ENCODE measurements at regions of chr17 and their contacts with region 1.

Region 1: DNA sequence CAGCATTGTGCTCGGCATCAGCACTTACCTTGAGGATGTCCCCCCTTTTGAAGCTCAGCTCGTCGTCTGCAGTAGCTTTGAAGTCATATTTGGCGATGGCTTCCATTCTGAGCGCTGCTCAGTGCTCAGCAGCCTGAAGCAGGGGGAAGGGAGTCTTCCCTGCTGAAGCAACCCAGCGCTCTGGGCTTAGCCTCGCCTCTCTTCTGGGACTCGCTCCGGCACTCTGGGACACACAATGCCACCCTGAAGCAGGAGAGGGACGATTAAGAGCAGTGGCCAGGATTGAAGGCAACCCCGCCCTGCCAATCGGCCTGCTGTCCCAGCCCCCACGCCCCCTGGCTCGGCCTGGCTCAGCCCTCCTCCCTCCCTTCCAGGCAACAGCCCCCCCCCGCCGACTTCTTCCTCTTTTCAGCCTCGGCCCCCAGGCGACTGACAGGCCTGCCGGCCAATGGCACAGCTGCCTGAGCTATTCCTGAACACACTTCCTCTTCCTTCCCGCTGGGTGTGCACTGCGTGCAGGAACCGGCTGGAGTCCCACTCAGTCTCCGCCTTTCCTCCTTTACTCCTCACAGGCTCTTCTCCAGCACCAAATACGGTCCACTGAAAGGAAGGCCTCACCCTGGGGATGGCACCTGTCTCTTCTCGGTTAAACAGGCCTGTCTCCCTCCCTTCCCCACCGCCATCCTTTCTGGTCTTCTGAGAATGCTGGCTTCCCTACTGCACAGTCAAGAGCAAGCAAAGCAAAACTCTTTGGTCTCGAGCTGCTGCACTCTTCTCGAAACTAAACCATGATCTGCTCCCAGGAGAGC is 11.8 kb downstream of the GRB2 start:
- DNase-seq: peak; percentile 97
- ATAC-seq: peak; percentile 99
- H3K4me3 ChIP-seq: peak overlapping the region; percentile 69 to 94 (median 91)
- H3K27ac ChIP-seq: peak overlapping the region; percentile 72
- H3K4me1 ChIP-seq: peaks cover 69% of the 10 kb centered on the region
- H3K27me3 ChIP-seq: peaks cover 0 to 3% of the 10 kb centered on the region in 2 experiments; a peak in 1 of 5 replicates
- CTCF ChIP-seq: peak; percentile 44
- EP300 ChIP-seq: peak in 1 of 2 experiments; percentile 62; a peak in 3 of 4 replicates
- POLR2A ChIP-seq: peak; percentile 84 to 90
- RAD21 ChIP-seq: 0 out of 2 replicates have a peak, but pooled peaks have one; percentile 28

Region 2: DNA sequence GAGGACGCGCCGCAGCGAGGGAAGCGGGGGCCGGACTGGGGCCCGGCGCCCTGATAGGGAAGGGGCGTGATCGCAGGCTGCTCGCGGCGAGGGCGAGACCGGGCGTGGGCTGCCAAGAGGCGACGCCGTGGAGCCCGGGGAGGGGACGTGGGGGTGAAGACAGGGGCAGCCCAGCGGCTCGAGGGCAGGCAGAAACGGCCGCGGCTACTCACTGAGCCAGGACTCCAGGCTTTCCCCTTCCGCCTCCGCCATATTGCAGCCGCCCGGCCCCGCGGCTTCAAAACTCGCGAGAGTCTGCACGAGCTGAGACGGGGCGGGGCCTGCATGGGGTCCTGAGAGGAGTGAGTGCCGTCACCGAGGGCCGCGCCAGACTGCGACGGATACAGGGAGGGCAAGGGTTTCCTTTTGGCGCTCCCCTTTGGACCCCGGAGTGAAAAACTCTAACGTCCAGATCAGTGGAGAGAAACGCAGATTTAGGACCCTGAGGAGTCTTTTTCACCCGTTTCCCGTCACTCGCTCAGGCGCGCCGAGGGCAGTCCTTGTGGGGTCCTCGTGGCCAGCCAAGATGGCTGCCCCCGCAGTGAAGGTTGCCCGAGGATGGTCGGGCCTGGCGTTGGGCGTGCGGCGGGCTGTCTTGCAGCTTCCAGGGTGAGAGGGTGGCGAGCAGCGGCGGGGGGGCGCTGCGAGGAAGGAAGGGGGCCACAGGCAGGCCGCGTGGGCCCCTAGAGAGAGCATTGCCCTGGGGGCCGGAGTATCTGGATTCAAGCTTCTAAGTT is 132.2 kb before region 1 on chr17 and contains the starts of genes GGA3 and MRPS7:
- CTCF ChIA-PET with region 1: no interaction called
- POLR2A ChIA-PET with region 1: interaction called, 43 read pairs
- in situ Hi-C with region 1: no loop called
- intact Hi-C with region 1: no loop called
- DNase-seq: peak; percentile 92
- ATAC-seq: peak; percentile 95
- H3K4me3 ChIP-seq: peak within 1 kb of the TSS; percentile 72 to 89 (median 77)
- H3K27ac ChIP-seq: peak within 1 kb of the TSS; percentile 97
- H3K4me1 ChIP-seq: peaks cover 44% of the 10 kb centered on the region
- H3K27me3 ChIP-seq: no peaks in the 10 kb centered on the region; a peak in 1 of 5 replicates
- CTCF ChIP-seq: 0 out of 2 replicates have a peak, but pooled peaks have one; percentile 2
- EP300 ChIP-seq: 0 out of 4 replicates have a peak, but pooled peaks of 1 of the 2 experiments have one; percentile 54
- POLR2A ChIP-seq: peak; percentile 79 to 97
- RAD21 ChIP-seq: no peak; the same call in 1 of the 2 replicates
- total RNA-seq, gene GGA3: 20.9 and 28.4 TPM in 2 replicates
- total RNA-seq, gene MRPS7: 162 and 184 TPM in 2 replicates

Region 3: GRCh38 chr17:75289115-75289831 is 104.5 kb before region 1 on chr17 and contains the start of gene SLC25A19:
- CTCF ChIA-PET with region 1: no interaction called
- POLR2A ChIA-PET with region 1: interaction called, 29 read pairs
- in situ Hi-C with region 1: no loop called
- intact Hi-C with region 1: no loop called
- DNase-seq: peak; percentile 99
- ATAC-seq: peak; percentile 97
- H3K4me3 ChIP-seq: peak within 1 kb of the TSS; percentile 74 to 94 (median 87)
- H3K27ac ChIP-seq: peak within 1 kb of the TSS; percentile 75
- H3K4me1 ChIP-seq: peaks cover 57% of the 10 kb centered on the region
- H3K27me3 ChIP-seq: no peaks in the 10 kb centered on the region
- CTCF ChIP-seq: peak; percentile 93
- EP300 ChIP-seq: no peak
- POLR2A ChIP-seq: peak; percentile 94 to 99
- RAD21 ChIP-seq: peak; percentile 77
- total RNA-seq, gene SLC25A19: 41.4 and 42.2 TPM in 2 replicates

Region 4: DNA sequence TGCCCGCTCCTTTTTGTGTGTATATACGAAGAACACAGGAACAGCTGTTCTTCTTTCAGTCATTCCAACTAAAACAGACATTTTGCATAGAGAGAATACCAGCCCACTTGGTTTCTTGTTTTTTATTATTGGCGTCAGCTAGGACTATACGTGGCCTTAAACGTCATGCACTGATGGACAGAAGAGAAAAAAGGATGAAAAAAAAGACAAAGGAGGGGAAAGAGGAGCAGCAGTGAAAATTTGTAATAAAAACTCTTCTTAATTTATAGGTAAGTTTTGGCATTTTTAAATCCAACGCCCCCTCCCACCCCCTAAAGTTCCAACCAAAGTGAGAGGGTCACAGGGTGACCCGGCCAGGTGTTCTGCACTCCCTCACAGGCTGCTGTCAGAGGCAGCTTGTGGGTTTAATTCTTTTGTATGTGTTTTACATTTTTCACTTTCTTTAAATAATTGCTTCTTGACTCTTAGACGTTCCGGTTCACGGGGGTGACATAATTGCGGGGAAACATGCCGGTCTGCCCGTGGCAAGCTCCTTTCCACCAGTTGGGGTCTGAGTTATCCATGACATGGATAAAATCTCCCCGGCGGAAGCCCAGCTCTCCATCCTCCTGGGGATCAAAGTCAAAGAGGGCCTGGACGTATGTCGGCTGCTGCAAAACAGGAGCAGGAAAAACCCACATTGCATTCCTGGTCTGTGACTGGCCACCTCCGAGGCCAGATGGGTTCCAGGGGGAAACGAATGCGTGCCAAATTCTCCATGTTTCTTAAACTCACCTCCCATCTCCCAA is 73.6 kb before region 1 on chr17:
- CTCF ChIA-PET with region 1: no interaction called
- POLR2A ChIA-PET with region 1: interaction called, 12 read pairs
- in situ Hi-C with region 1: loop called (anchors 5 kb)
- intact Hi-C with region 1: no loop called
- DNase-seq: no peak
- ATAC-seq: no peak
- H3K4me3 ChIP-seq: no peak overlapping the region
- H3K27ac ChIP-seq: no peak overlapping the region
- H3K4me1 ChIP-seq: no peaks in the 10 kb centered on the region
- H3K27me3 ChIP-seq: no peaks in the 10 kb centered on the region
- CTCF ChIP-seq: no peak
- EP300 ChIP-seq: no peak
- POLR2A ChIP-seq: no peak
- RAD21 ChIP-seq: no peak

Region 5: DNA sequence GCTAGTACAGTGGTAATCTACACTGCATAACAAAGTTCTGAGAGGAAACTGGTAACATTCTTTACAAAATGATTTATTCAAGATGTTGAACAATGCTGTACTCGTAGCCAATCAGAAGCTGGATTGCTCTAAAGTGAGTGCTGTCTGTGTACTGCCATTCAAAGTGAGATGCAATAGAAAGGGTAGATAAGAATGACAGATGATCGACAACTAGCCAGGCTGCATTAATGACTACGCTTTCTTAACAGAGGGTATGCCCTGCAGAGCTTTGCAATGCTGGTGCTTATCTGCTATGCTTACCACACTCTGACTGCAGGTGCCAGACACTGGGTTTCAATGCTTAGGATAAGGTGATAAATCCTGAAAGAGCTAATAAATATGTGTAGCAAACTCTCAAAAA is 58.4 kb before region 1 on chr17:
- CTCF ChIA-PET with region 1: no interaction called
- POLR2A ChIA-PET with region 1: interaction called, 11 read pairs
- in situ Hi-C with region 1: no loop called
- intact Hi-C with region 1: no loop called
- DNase-seq: no peak
- ATAC-seq: no peak
- H3K4me3 ChIP-seq: no peak overlapping the region
- H3K27ac ChIP-seq: no peak overlapping the region
- H3K4me1 ChIP-seq: 0 out of 2 replicates have a peak, but pooled peaks cover 9% of the 10 kb centered on the region
- H3K27me3 ChIP-seq: no peaks in the 10 kb centered on the region
- CTCF ChIP-seq: no peak
- EP300 ChIP-seq: no peak
- POLR2A ChIP-seq: no peak
- RAD21 ChIP-seq: no peak

Region 6: GRCh38 chr17:75350706-75351105 is 43.0 kb before region 1 on chr17:
- CTCF ChIA-PET with region 1: no interaction called
- POLR2A ChIA-PET with region 1: interaction called, 11 read pairs
- in situ Hi-C with region 1: no loop called
- intact Hi-C with region 1: no loop called
- DNase-seq: no peak
- ATAC-seq: peak; percentile 41; the same call in 2 of the 3 replicates
- H3K4me3 ChIP-seq: no peak overlapping the region
- H3K27ac ChIP-seq: no peak overlapping the region
- H3K4me1 ChIP-seq: peaks cover 76% of the 10 kb centered on the region
- H3K27me3 ChIP-seq: no peaks in the 10 kb centered on the region
- CTCF ChIP-seq: no peak
- EP300 ChIP-seq: no peak
- POLR2A ChIP-seq: no peak
- RAD21 ChIP-seq: no peak

Region 7: GRCh38 chr17:75405365-75406221 is 11.9 kb after region 1 on chr17 and contains the start of gene GRB2:
- CTCF ChIA-PET with region 1: interaction called, 3 read pairs
- POLR2A ChIA-PET with region 1: interaction called, 51 read pairs
- in situ Hi-C with region 1: no loop called
- intact Hi-C with region 1: no loop called
- DNase-seq: peak; percentile 96
- ATAC-seq: peak; percentile 84
- H3K4me3 ChIP-seq: peak within 1 kb of the TSS; percentile 73 to 99 (median 96)
- H3K27ac ChIP-seq: peak within 1 kb of the TSS; percentile 87
- H3K4me1 ChIP-seq: peaks cover 57% of the 10 kb centered on the region
- H3K27me3 ChIP-seq: no peaks in the 10 kb centered on the region; a peak in 1 of 5 replicates
- CTCF ChIP-seq: peak; percentile 22; the same call in 1 of the 2 replicates
- EP300 ChIP-seq: 0 out of 4 replicates have a peak, but pooled peaks of 1 of the 2 experiments have one; percentile 2
- POLR2A ChIP-seq: peak; percentile 71 to 94
- RAD21 ChIP-seq: peak; percentile 44; the same call in 1 of the 2 replicates
- total RNA-seq, gene GRB2: 92.3 and 95.7 TPM in 2 replicates

Region 8: GRCh38 chr17:76032073-76032779 is 638.5 kb after region 1 on chr17:
- CTCF ChIA-PET with region 1: no interaction called
- POLR2A ChIA-PET with region 1: no interaction called
- in situ Hi-C with region 1: no loop called
- intact Hi-C with region 1: no loop called
- DNase-seq: peak; percentile 49
- ATAC-seq: peak; percentile 17
- H3K4me3 ChIP-seq: peak overlapping the region in 2 of 3 experiments; percentile 17 to 49; a peak in 5 of 6 replicates
- H3K27ac ChIP-seq: no peak overlapping the region
- H3K4me1 ChIP-seq: peaks cover 56% of the 10 kb centered on the region
- H3K27me3 ChIP-seq: no peaks in the 10 kb centered on the region; a peak in 1 of 5 replicates
- CTCF ChIP-seq: no peak
- EP300 ChIP-seq: peak in 1 of 2 experiments; percentile 55; a peak in 1 of 4 replicates
- POLR2A ChIP-seq: no peak
- RAD21 ChIP-seq: no peak